T-cell (primary cell): ENCODE measurements at regions of chr9 and their contacts with region 1.

Region 1: DNA sequence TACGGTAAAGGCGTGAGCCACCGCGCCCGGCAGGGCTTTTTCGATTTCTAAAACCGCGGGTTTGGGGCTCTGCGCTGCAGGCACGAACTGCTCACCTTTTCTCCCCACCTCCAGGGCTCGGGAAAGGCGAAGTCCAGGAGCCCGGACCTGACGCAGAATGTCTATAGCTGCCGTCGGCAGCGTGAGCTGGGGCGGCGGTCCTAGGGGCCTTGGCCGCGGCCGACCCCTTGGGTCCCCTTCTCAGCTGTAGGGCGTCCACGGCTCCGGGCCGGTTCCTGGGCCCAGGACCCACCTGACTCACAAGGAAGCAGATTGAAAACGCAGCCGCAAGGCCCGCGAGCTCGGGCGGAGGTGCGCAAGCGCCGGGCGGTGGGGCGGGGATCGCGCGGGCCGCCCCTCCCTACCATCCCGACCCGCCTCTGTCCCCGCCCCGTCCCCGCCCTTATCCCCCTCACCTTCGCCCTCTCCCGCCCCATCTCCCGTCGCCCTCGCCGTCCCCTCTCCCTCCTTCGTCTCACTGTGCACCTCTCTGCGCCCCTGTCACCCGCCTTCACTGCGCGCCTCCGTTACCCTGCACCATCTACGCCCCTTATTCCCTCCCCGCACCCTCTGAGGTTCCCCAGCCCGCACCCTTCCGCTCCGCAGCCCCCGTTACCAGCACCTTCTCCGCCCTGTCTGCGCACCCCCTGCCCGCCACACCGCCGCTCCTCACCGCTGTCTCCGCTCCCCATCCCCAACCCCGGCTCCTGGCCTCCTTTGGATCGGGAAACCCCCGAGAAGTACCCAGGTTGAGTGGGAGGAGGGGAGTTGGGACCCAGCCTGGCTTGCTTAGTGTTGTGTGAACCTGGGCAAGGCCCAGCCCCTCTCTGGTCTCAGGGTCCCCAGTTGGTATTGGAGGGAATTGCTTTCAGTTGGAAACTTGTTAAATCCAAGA is at the start of gene HDHD3:
- DNase-seq: peak; percentile 23 to 89 (median 71)
- ATAC-seq: peak; percentile 90 to 94 (median 92)
- H3K4me3 ChIP-seq: peak within 1 kb of the TSS; percentile 95 to 97
- H3K4me3 Mint-ChIP-seq: peak within 1 kb of the TSS; percentile 81 to 84 (median 83)
- H3K27ac ChIP-seq: peak within 1 kb of the TSS; percentile 75
- H3K27ac Mint-ChIP-seq: peak within 1 kb of the TSS; percentile 81 to 88
- H3K4me1 ChIP-seq: peaks cover 0 to 22% of the 10 kb centered on the region in 2 experiments
- H3K4me1 Mint-ChIP-seq: peaks cover 13 to 17% (median 16%) of the 10 kb centered on the region in 3 donors
- H3K27me3 ChIP-seq: no peaks in the 10 kb centered on the region
- H3K27me3 Mint-ChIP-seq: peaks cover 0 to 7% of the 10 kb centered on the region in 2 donors
- total RNA-seq, gene HDHD3: 15.2 to 34.6 (median 17.4) TPM

Region 2: GRCh38 chr9:113410207-113410864 is 33.4 kb after region 1 on chr9 and contains the starts of genes C9orf43 and POLE3:
- CTCF ChIA-PET with region 1: interaction called in 1 of 2 experiments, 5 read pairs
- POLR2A ChIA-PET with region 1: interaction called in 1 of 2 experiments, 13 read pairs
- DNase-seq: peak; percentile 87 to 97 (median 93)
- ATAC-seq: peak; percentile 89 to 95 (median 92)
- H3K4me3 ChIP-seq: peak within 1 kb of the TSS; percentile 62 to 77
- H3K4me3 Mint-ChIP-seq: peak within 1 kb of the TSS; percentile 97 to 99 (median 99)
- H3K27ac ChIP-seq: peak within 1 kb of the TSS; percentile 93
- H3K27ac Mint-ChIP-seq: peak within 1 kb of the TSS; percentile 99 to 100
- H3K4me1 ChIP-seq: peaks cover 7 to 24% of the 10 kb centered on the region in 2 experiments
- H3K4me1 Mint-ChIP-seq: peaks cover 33 to 37% (median 35%) of the 10 kb centered on the region in 3 donors
- H3K27me3 ChIP-seq: no peaks in the 10 kb centered on the region
- H3K27me3 Mint-ChIP-seq: peaks cover 0 to 2% of the 10 kb centered on the region in 2 donors
- total RNA-seq, gene C9orf43: 0.28 to 1.1 (median 0.82) TPM
- total RNA-seq, gene POLE3: 47.2 to 59.1 (median 50.6) TPM